ENCODE measurements at regions of chr7 and their contacts with region 1.

Region 1: GRCh38 chr7:6516387-6516983 is 34.8 kb downstream of the GRID2IP start:
- DNase-seq: peak; percentile 34 to 69 (median 56)
- ATAC-seq: peak; percentile 82
- H3K4me3 ChIP-seq: peak overlapping the region; percentile 64
- H3K4me3 Mint-ChIP-seq: peak overlapping the region; percentile 79 to 87 (median 84)
- H3K27ac ChIP-seq: no peak overlapping the region
- H3K27ac Mint-ChIP-seq: peak overlapping the region in 2 of 9 donors; percentile 38 to 70
- H3K4me1 ChIP-seq: no peaks in the 10 kb centered on the region
- H3K4me1 Mint-ChIP-seq: peaks cover 6 to 11% (median 9%) of the 10 kb centered on the region in 7 donors
- H3K27me3 ChIP-seq: no peaks in the 10 kb centered on the region
- H3K27me3 Mint-ChIP-seq: peaks cover 0 to 4% (median 0%) of the 10 kb centered on the region in 5 donors

Region 2: GRCh38 chr7:6558837-6559236 is 42.4 kb after region 1 on chr7:
- CTCF ChIA-PET with region 1: interaction called, 16 read pairs
- POLR2A ChIA-PET with region 1: no interaction called
- intact Hi-C with region 1: loop called in 1 of 2 experiments (anchors 1 kb)
- DNase-seq: peak in 3 of 9 donors; percentile 16 to 27 (median 20)
- ATAC-seq: peak; percentile 47
- H3K4me3 ChIP-seq: no peak overlapping the region
- H3K4me3 Mint-ChIP-seq: no peak overlapping the region
- H3K27ac ChIP-seq: no peak overlapping the region
- H3K27ac Mint-ChIP-seq: no peak overlapping the region
- H3K4me1 ChIP-seq: peaks cover 0 to 11% of the 10 kb centered on the region in 2 donors
- H3K4me1 Mint-ChIP-seq: peaks cover 4 to 13% (median 9%) of the 10 kb centered on the region in 7 donors
- H3K27me3 ChIP-seq: no peaks in the 10 kb centered on the region
- H3K27me3 Mint-ChIP-seq: peaks cover 0 to 4% (median 0%) of the 10 kb centered on the region in 5 donors

Region 3: DNA sequence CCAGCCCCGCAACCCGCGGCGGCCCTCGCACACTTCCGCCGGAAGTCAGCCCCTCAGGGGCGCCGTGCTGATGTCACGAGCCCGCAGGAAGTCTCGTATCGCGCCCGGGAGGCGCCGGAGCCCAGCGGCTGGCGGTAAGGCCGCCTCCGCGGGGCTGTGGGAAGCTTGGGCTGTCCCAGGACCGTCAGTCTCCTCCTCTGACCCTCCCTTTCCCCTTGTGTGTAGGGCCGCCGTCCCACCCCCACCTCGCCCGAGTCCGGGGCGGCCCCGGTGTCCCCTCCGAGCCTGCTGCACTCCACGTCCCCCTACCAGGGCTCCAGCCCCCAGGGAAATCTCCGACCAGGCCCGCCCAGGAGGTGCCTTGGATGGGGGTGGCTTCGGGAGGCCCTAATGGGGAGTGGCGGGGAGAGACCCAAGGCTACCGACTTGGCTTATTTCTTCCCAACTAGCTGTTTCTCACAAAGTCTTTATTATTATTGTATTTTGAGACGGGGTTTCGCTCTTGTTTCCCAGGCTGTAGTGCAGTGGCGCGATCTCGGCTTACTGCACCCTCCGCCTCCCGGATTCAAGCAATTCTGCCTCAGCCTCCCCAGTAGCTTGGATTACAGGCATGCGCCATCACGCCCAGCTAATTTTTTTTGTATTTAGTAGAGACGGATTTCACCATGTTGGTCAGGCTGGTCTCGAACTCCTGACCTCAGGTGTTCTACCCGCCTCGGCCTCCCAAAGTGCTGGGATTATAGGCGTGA is 61.1 kb after region 1 on chr7 and contains the start of gene ZDHHC4:
- CTCF ChIA-PET with region 1: interaction called, 3 read pairs
- POLR2A ChIA-PET with region 1: interaction called, 4 read pairs
- intact Hi-C with region 1: loop called in 1 of 2 experiments (anchors 1 kb)
- DNase-seq: peak; percentile 75 to 90 (median 83)
- ATAC-seq: peak; percentile 97
- H3K4me3 ChIP-seq: peak within 1 kb of the TSS; percentile 76
- H3K4me3 Mint-ChIP-seq: peak within 1 kb of the TSS; percentile 83 to 91 (median 89)
- H3K27ac ChIP-seq: peak within 1 kb of the TSS; percentile 99
- H3K27ac Mint-ChIP-seq: peak within 1 kb of the TSS; percentile 83 to 96 (median 93)
- H3K4me1 ChIP-seq: no peaks in the 10 kb centered on the region
- H3K4me1 Mint-ChIP-seq: peaks cover 0 to 29% (median 16%) of the 10 kb centered on the region in 7 donors
- H3K27me3 ChIP-seq: no peaks in the 10 kb centered on the region
- H3K27me3 Mint-ChIP-seq: peaks cover 0 to 3% (median 0%) of the 10 kb centered on the region in 5 donors
- total RNA-seq, gene ZDHHC4: 25.2 to 42.2 (median 31.8) TPM

Region 4: DNA sequence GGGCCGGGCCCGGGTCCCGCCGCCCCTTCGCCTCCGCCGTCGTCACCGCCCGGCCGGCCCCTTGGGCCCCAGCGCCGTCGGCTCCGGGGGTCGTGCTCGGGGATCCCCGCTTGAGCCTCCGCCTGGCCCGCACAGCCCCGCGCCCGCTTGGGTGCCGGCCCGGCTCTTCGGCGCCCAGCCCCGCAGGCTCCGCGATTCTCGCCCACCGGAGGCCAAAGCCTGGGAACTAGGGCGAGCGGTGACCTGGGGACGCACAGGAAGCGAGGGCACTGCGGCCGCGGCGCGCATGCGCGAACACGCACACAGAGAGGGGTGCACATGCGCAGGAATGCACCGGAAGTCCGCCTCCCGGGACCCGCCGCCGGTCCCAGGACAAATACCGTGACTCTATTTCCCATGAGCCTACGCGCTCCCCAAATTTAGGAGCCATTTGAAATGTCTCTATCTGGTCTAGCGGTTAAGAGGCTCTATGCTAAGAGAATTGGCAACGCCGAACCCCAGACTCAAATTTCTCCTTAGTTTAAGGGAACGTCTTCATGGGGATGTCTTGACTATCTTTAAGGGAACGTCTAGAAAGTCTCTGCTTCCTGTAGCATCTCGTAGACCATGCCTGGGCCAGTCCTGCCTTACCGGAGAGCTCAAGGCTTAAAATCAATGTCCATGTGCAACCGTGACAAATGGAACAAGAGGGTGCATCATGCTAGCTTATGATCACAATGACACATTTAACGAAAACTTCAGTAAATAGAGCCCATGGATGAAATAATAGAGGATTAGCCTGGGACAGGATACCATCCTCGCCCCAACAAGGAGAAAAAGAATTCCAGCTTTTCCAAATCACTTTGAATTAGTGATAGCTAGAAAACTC is 190.4 kb after region 1 on chr7 and contains the start of gene ZNF12:
- CTCF ChIA-PET with region 1: no interaction called
- POLR2A ChIA-PET with region 1: no interaction called
- intact Hi-C with region 1: no loop called
- DNase-seq: peak; percentile 88 to 96 (median 92)
- ATAC-seq: peak; percentile 93
- H3K4me3 ChIP-seq: peak within 1 kb of the TSS; percentile 68
- H3K4me3 Mint-ChIP-seq: peak within 1 kb of the TSS; percentile 92 to 98 (median 94)
- H3K27ac ChIP-seq: peak within 1 kb of the TSS; percentile 85
- H3K27ac Mint-ChIP-seq: peak within 1 kb of the TSS; percentile 88 to 96 (median 92)
- H3K4me1 ChIP-seq: peaks cover 26 to 33% of the 10 kb centered on the region in 2 donors
- H3K4me1 Mint-ChIP-seq: peaks cover 34 to 55% (median 38%) of the 10 kb centered on the region in 7 donors
- H3K27me3 ChIP-seq: no peaks in the 10 kb centered on the region
- H3K27me3 Mint-ChIP-seq: peaks cover 0 to 8% (median 5%) of the 10 kb centered on the region in 5 donors
- total RNA-seq, gene ZNF12: 26.2 to 58.1 (median 29.3) TPM

Region 5: GRCh38 chr7:7554021-7554432 is 1037.5 kb after region 1 on chr7:
- CTCF ChIA-PET with region 1: no interaction called
- POLR2A ChIA-PET with region 1: no interaction called
- intact Hi-C with region 1: no loop called
- DNase-seq: no peak
- ATAC-seq: no peak
- H3K4me3 ChIP-seq: no peak overlapping the region
- H3K4me3 Mint-ChIP-seq: no peak overlapping the region
- H3K27ac ChIP-seq: no peak overlapping the region
- H3K27ac Mint-ChIP-seq: no peak overlapping the region
- H3K4me1 ChIP-seq: no peaks in the 10 kb centered on the region
- H3K4me1 Mint-ChIP-seq: no peaks in the 10 kb centered on the region
- H3K27me3 ChIP-seq: no peaks in the 10 kb centered on the region
- H3K27me3 Mint-ChIP-seq: peaks cover 0 to 25% (median 3%) of the 10 kb centered on the region in 5 donors

Measured in naive thymus-derived CD4-positive, alpha-beta T cell (primary cell).